ENCODE measurements at regions of chr3 and their contacts with region 1.

Region 1: DNA sequence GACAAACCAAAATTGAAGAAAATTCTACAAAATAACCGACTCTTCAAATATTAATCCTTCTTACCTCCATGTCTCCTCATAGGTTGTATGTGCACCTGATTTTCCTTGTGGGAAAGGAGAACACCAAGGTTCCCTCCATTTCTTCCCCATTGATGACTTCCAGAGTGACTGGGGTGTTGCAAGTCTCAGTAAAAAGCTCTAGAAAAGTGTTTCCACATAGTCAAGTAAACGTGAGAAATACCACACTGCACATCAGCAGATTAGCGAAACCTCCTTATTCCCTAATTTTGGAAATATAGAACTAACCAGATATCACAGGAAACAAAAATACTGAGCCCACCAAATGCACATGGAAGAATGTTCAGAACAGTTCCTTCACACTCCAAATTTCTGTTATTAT is 4.9 kb upstream of the RPN1 start:
- DNase-seq: no peak
- H3K4me3 Mint-ChIP-seq: no peak overlapping the region
- H3K27ac Mint-ChIP-seq: no peak overlapping the region
- H3K4me1 Mint-ChIP-seq: no peaks in the 10 kb centered on the region
- H3K27me3 Mint-ChIP-seq: no peaks in the 10 kb centered on the region
- CTCF ChIP-seq: no peak

Region 2: DNA sequence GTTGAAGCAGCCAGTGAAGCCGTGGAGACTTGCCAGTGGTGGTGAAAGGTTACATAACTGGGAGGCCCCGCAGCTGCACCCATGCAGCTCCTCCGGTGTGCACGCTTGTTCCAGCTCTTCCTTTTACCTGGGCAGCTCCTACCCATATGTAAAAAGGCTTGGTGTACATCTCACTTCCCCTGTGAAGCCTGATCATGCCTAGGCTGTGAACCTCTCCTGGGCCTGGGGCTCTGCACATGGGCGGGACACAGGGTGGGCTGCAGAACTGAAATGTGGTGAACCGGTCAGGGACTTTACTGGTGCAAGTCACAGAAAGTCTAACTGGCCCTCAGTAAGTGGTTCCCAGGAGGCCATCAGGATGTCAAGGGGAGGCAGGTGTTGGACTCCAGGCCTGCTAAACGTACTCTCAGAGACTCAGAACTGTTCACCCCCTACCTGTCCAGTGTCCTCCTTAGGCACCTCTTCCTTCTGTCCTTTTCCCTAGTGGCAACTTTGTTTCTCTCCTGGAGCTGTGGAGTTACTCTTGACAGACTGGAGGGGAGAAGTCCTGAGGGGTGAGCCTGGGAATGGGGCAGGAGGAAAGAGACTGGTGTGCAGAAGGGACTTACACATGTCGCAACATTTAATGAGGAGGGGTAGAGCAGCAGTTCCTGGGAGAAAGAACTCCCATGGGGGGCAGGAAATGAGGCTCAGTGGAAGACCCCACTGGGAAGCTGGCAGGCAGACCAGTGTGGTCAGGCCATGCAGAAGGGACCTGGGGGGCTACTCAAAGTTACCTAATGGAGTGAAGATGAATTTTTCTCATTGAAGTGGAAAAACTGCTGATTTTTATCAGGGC is 354.1 kb before region 1 on chr3:
- CTCF ChIA-PET with region 1: interaction called, 13 read pairs
- intact Hi-C with region 1: no loop called
- DNase-seq: no peak
- H3K4me3 Mint-ChIP-seq: no peak overlapping the region
- H3K27ac Mint-ChIP-seq: no peak overlapping the region
- H3K4me1 Mint-ChIP-seq: peaks cover 8% of the 10 kb centered on the region
- H3K27me3 Mint-ChIP-seq: no peaks in the 10 kb centered on the region
- CTCF ChIP-seq: no peak

Region 3: DNA sequence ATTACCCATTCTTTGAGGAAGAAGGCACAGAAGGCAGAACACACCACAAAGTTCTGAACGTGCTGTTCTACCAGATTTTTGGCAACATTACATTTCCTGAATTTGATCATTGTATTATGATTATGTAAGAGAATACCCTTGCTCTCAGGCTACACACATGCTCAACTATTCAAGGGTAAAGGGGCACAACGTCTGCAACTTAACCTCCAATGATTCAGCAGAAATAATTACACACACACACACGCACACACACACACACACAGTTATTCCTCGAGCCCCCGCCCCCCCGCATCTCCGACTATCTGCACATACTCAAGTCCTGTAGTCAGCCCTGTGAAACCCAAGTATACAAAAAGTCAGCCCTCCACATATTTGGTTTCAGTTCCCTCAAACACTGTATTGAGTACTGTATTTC is 31.8 kb before region 1 on chr3:
- CTCF ChIA-PET with region 1: interaction called, 8 read pairs
- intact Hi-C with region 1: loop called (anchors 1 kb)
- DNase-seq: no peak
- H3K4me3 Mint-ChIP-seq: no peak overlapping the region
- H3K27ac Mint-ChIP-seq: peak overlapping the region; percentile 40
- H3K4me1 Mint-ChIP-seq: peaks cover 13% of the 10 kb centered on the region
- H3K27me3 Mint-ChIP-seq: no peaks in the 10 kb centered on the region
- CTCF ChIP-seq: no peak

Region 4: DNA sequence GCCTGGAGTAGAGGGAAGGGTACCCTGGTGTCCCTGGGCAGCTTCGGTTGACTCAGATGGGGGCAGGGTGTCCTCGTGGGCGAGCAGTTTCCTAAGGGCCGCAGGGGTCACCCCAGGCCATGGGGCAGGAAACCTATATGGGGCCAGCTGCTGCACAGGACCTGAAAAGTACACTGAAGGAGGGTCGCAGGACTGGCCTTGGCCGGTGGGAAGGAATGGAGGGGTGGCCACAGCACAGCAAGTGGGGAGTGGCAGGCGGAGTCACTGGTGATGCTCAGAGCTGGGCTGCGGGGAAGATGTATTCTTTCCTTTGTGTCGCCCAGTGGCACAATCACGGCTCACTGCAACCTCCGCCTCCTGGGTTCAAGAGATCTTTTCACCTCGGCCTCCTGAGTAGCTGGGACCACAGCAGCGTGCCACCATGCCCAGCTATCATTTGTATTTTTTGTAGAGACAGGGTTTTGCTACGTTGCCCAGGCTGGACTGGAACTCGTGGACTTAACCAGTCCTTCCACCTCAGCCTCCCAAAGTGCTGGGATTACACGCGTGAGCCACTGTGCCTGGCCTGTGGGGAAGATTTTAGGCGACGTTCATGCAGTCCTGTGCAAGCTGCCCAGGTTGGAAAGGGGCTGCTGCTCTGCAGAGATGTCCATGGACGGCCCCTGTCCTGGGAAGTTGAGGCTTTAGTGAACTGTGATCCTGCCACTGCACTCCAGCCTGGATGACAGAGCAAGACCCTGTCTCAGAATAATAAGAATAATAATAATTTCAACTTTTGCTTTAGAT is 715.7 kb after region 1 on chr3:
- CTCF ChIA-PET with region 1: no interaction called
- intact Hi-C with region 1: no loop called
- DNase-seq: no peak
- H3K4me3 Mint-ChIP-seq: no peak overlapping the region
- H3K27ac Mint-ChIP-seq: no peak overlapping the region
- H3K4me1 Mint-ChIP-seq: no peaks in the 10 kb centered on the region
- H3K27me3 Mint-ChIP-seq: peaks cover 17% of the 10 kb centered on the region
- CTCF ChIP-seq: no peak

Measured in Calu3 (cell line).